AG04449 (cell line): ENCODE measurements at regions of chr2 and their contacts with region 1.

Region 1: GRCh38 chr2:206783718-206784117 is 18.3 kb downstream of the FASTKD2 start:
- DNase-seq: no peak
- H3K4me3 ChIP-seq: no peak overlapping the region
- CTCF ChIP-seq: peak; percentile 38

Region 2: DNA sequence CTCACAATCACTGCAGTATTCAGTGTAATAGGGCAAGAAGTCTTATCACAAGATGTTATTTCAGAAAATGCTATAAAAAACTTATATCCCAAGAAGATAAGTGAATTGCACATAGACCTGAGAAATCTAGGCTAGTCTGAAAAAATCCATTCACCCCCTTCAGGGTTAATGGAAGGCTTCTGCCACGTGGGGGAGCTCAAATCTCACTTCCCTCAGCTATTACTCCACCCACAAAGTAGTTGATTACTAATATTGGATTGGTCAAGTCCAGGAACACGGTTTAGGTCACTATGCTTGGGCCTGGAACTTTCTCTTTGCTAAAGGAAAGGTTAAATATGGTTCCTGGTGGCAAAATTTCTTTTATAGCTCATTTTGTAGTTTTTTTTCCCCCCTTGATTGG is 391.6 kb before region 1 on chr2:
- CTCF ChIA-PET with region 1: interaction called, 10 read pairs
- POLR2A ChIA-PET with region 1: no interaction called
- DNase-seq: no peak
- H3K4me3 ChIP-seq: no peak overlapping the region
- CTCF ChIP-seq: peak; percentile 46

Region 3: GRCh38 chr2:206693399-206694137 is 90.2 kb before region 1 on chr2:
- CTCF ChIA-PET with region 1: interaction called, 71 read pairs
- POLR2A ChIA-PET with region 1: no interaction called
- DNase-seq: peak; percentile 9
- H3K4me3 ChIP-seq: no peak overlapping the region
- CTCF ChIP-seq: peak; percentile 39

Region 4: GRCh38 chr2:206765242-206766056 is 18.3 kb before region 1 on chr2 and contains the starts of genes FASTKD2 and MDH1B:
- CTCF ChIA-PET with region 1: interaction called, 19 read pairs
- POLR2A ChIA-PET with region 1: no interaction called
- DNase-seq: peak; percentile 82
- H3K4me3 ChIP-seq: peak within 1 kb of the TSS; percentile 85
- CTCF ChIP-seq: no peak

Region 5: GRCh38 chr2:206800506-206801417 is 17.0 kb after region 1 on chr2:
- CTCF ChIA-PET with region 1: interaction called, 82 read pairs
- POLR2A ChIA-PET with region 1: no interaction called
- DNase-seq: peak; percentile 38
- H3K4me3 ChIP-seq: no peak overlapping the region
- CTCF ChIP-seq: peak; percentile 68